Cardiac septum (tissue), 1 donor: ENCODE measurements at regions of chr14 and their contacts with region 1.

Region 1: GRCh38 chr14:91060351-91061055 is at the start of gene RPS6KA5:
- DNase-seq: peak; percentile 100
- total RNA-seq, gene RPS6KA5: 3.8 TPM

Region 2: DNA sequence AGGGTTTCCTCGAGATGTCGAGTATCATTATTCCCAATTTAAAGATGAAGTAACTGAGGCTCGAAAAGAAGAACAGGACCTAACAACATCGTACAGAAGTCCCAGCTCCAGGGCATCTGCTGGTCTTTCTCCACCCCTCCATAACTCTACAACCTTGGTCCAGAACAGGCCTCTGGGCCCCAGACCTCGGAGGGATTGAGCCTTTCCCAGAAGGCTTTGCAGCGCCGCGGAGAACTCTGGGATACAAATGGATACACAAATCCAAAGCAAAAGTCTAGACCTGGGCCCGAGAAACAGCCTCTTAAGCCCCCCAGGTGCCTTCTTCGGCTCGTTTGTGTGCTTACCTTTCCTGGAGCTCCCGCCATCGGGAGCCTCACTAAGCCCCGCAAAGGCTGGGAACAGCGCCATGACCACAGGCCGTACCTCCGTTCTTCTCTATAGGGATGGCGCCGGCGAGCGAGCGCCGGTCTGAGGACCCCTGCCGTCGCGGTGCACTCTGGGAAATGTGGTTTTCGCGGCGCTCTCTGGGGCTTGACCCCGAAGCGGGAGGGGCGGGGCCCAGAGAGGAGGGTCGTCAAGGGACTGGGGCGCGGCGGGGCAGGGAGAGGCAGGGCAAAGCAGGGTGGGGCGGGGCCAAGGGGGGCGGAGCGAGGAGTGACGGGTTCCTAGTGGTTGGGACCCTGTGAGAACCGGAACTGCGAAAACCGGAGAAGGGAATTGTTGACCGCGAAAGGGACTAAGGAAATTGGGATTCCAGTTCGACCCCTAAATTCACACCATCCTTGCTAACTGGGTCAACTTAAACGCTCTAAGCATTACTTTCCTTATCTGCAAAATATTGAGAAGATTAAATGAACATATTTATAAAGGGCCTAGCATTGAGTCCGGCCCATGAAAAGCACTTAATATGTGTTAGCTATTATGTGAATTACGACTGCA is 728.7 kb before region 1 on chr14 and contains the start of gene NRDE2:
- intact Hi-C with region 1: loop called (anchors 5 kb)
- DNase-seq: peak; percentile 99
- total RNA-seq, gene NRDE2: 11.2 TPM

Region 3: GRCh38 chr14:91009501-91010152 is 50.9 kb before region 1 on chr14:
- intact Hi-C with region 1: no loop called
- DNase-seq: no peak

Region 4: GRCh38 chr14:91114079-91115065 is 53.9 kb after region 1 on chr14:
- intact Hi-C with region 1: loop called (anchors 1 kb)
- DNase-seq: peak; percentile 93

Region 5: GRCh38 chr14:91170504-91171121 is 110.1 kb after region 1 on chr14:
- intact Hi-C with region 1: loop called (anchors 2 kb)
- DNase-seq: no peak

Region 6: GRCh38 chr14:91606851-91607250 is 546.3 kb after region 1 on chr14:
- intact Hi-C with region 1: no loop called
- DNase-seq: no peak